Mammary epithelial cell (primary cell): ENCODE measurements at regions of chr15 and their contacts with region 1.

Region 1: GRCh38 chr15:71443538-71443937 is 328.3 kb downstream of the THSD4 start:
- DNase-seq: no peak
- H3K4me3 ChIP-seq: no peak overlapping the region
- H3K27ac ChIP-seq: peak overlapping the region; percentile 99
- H3K4me1 ChIP-seq: peaks cover 66% of the 10 kb centered on the region
- H3K27me3 ChIP-seq: no peaks in the 10 kb centered on the region
- CTCF ChIP-seq: peak; percentile 78 to 89

Region 2: DNA sequence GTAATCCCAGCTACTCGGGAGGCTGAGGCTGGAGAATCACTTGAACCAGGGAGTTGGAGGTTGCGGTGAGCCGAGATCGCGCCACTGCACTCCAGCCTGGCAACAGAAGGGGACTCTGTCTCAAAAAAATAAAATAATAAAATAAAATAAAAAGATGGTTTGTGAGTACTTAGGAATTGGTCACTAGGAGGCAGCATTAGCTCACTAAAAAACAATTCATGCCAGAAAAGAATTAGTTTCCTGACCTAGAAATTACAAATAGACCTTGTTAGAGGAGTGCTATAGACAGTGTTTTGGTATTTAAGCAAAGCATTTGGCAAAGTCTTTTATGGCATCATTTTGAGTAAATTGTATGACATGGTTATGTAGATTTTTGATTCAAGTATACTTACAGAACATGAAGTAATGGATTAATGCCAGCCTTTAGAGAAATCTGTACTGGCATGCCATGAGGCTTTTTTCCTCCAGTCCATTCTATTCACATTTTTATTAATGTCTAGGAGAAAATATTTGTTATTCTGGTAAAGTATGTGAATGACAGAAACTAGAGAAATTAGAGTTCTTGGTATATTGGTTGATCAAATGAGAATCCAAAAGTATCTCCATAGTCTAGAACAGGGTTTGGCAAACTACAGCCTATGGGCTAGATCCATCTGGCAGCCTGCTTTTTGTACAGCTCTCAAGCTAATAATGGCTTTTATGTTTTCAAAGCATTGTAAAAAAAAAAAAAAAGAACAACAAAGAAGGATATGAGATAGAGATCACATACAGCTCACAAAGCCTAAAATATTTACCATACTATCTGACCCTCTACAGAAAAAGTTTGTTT is 469.3 kb before region 1 on chr15:
- CTCF ChIA-PET with region 1: interaction called, 4 read pairs
- dilution Hi-C with region 1: no loop called
- in situ Hi-C with region 1: loop called (anchors 5 kb)
- intact Hi-C with region 1: loop called (anchors 1 kb)
- DNase-seq: peak; percentile 36
- H3K4me3 ChIP-seq: no peak overlapping the region
- H3K27ac ChIP-seq: no peak overlapping the region
- H3K4me1 ChIP-seq: no peaks in the 10 kb centered on the region
- H3K27me3 ChIP-seq: no peaks in the 10 kb centered on the region
- CTCF ChIP-seq: peak; percentile 16 to 49

Region 3: GRCh38 chr15:71043361-71043760 is 400.2 kb before region 1 on chr15:
- CTCF ChIA-PET with region 1: interaction called, 3 read pairs
- dilution Hi-C with region 1: no loop called
- in situ Hi-C with region 1: no loop called
- intact Hi-C with region 1: loop called (anchors 2 kb)
- DNase-seq: peak; percentile 95
- H3K4me3 ChIP-seq: no peak overlapping the region
- H3K27ac ChIP-seq: peak overlapping the region; percentile 89
- H3K4me1 ChIP-seq: peaks cover 31% of the 10 kb centered on the region
- H3K27me3 ChIP-seq: no peaks in the 10 kb centered on the region
- CTCF ChIP-seq: no peak

Region 4: DNA sequence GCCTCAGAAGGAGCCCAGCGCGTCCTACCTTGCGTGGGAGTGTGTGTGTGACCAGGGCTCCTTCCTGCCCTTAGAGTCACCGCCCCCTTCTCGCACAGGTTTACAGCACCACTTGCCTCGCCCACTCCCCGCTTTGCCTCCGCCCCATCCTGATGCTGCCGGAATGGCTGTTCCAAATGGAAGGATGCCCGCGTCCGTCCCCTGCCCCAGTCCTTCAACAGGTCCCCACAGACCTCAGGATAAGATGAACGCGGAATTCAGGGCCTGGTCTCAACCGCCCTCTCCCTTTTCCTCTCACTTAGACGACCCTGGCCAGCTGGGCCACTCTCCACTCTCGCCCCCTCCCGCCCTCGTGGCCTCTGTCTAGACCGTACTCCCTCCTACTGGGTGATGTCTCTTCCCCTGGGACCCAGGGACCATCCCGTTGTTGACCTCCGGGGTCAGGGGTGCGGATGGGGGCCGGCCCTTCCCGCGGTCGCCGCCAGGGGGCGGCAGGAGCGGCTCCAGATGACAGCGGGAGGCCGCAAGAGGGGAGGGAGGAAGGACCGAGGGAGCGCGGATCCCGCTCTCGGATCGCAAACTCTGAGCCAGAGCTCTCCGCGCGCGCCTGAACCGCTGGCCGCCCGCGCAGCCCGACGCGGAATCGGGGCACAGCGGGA is 328.5 kb before region 1 on chr15 and contains the start of gene THSD4:
- CTCF ChIA-PET with region 1: interaction called, 8 read pairs
- dilution Hi-C with region 1: no loop called
- in situ Hi-C with region 1: loop called (anchors 5 kb)
- intact Hi-C with region 1: loop called (anchors 1 kb)
- DNase-seq: peak; percentile 66
- H3K4me3 ChIP-seq: peak within 1 kb of the TSS; percentile 71 to 75 (median 75)
- H3K27ac ChIP-seq: peak within 1 kb of the TSS; percentile 90
- H3K4me1 ChIP-seq: peaks cover 31% of the 10 kb centered on the region
- H3K27me3 ChIP-seq: no peaks in the 10 kb centered on the region
- CTCF ChIP-seq: peak; percentile 87 to 99
- total RNA-seq, gene THSD4: 87.7 to 111 TPM

Region 5: DNA sequence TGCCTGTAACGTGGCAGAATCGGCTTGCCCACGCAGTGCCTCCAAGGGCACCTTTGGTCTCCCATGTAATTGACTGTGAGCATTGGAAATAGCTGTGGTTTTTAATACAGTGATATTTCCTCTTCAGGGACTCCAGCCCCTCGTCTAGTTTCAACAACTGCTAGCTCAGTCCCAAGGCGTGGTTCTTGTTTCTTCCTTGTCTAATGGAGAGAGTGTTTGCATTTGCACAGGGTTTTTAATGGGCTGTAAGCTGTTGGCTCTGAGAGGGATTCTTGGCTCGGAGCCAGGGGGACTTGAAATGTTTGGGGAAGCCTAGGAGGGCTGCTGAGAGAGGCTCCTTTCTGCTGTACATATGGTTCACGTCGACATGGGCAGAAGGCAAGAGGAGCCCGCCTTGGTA is 242.1 kb before region 1 on chr15:
- CTCF ChIA-PET with region 1: interaction called, 12 read pairs
- dilution Hi-C with region 1: no loop called
- in situ Hi-C with region 1: no loop called
- intact Hi-C with region 1: no loop called
- DNase-seq: no peak
- H3K4me3 ChIP-seq: no peak overlapping the region
- H3K27ac ChIP-seq: no peak overlapping the region
- H3K4me1 ChIP-seq: peaks cover 3% of the 10 kb centered on the region
- H3K27me3 ChIP-seq: no peaks in the 10 kb centered on the region
- CTCF ChIP-seq: no peak

Region 6: DNA sequence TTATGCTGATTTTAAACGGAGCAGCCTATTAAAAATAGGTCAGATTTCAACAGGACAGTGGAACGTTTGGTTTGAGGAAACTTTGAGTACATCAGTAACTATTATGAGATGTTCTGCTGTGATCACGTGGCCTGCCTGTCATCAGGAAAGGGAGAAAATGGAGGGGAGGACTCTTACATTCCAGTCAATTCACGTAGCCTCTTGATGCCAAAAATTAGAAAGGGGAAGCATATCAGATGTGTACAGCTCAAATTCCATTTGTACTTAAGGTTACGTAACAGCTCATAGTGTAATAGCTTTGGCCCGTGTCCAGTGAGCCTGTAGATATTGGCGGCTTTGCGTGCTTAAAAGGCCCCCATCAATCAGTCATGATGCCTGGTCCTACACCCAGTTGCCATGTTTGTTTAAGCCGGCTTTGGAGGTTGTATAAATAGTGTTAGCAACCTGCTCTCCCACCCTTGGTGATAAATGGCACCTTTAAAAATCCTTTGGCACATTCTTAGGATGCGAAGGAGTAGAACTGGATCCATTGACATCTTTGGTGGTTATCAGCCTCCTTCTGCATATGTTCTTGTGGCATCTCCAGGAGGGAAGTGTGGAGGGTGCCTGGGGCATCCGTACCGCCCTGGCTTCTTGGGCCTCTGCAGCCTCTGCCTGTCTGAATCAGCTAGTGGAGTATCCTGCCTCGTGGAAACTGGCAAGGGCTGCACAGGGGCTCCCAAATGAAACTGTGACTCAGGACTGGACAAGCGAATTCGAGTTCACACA is 164.4 kb before region 1 on chr15:
- CTCF ChIA-PET with region 1: no interaction called
- dilution Hi-C with region 1: no loop called
- in situ Hi-C with region 1: no loop called
- intact Hi-C with region 1: loop called (anchors 5 kb)
- DNase-seq: peak; percentile 97
- H3K4me3 ChIP-seq: no peak overlapping the region
- H3K27ac ChIP-seq: peak overlapping the region; percentile 92
- H3K4me1 ChIP-seq: peaks cover 73% of the 10 kb centered on the region
- H3K27me3 ChIP-seq: no peaks in the 10 kb centered on the region
- CTCF ChIP-seq: no peak